Right ventricle myocardium inferior (tissue), 1 donor: ENCODE measurements at regions of chr12 and their contacts with region 1.

Region 1: GRCh38 chr12:53071591-53072551 is 7.3 kb downstream of the SPRYD3 start:
- DNase-seq: peak; percentile 87
- ATAC-seq: peak; percentile 58

Region 2: DNA sequence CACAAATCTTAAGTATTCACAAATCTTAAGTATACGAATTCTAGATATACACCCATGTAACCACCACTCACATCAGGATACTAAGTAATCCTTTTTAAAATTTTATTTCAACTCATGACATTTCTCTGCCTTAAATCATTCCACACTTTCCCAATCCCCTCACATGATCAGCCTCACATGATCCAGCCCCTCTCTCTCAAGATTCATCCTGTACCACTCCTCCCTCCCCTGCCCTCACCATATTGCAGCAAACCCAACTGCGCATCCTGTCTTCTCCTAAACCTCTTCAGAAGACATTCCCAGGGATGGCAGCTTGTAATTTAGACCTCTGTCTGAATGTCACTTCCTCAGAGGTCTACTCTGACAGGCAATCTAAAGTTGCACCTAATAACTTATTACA is 67.3 kb before region 1 on chr12:
- intact Hi-C with region 1: no loop called
- DNase-seq: no peak
- ATAC-seq: no peak

Region 3: DNA sequence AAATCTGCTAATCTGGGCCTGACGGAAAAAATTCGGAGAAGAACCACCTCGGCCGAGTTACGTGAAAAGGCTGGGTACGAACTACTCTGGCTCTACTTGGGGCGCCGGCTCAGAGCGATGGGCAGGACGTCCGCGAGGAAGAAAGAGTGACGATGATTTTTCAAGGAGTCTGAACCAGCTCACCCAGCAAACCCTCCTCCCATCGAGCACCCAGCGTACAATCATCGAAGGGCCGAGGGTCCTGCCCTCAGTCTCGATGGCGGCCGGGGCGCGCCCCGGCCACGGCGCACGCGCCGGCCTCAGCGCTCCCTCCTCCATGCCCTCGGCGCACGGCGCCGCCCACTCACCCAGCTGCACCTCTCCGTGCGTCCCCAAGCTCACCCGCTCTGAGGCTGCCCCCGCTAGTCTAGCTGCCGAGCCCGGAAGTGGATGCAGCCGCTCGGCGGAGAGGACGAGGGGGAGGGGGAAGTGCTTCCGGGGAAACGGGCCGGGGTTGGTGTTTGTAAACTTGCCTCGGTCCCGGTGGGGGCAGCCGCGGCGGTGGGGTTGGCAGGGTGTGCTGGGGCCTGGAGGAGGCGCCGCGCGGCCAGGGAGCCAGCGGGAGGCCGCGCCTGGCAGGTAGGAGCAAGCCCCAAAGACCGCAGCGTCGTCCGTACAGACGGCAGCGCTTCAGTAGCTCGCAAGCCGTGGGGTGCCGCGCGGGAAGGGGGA is 108.5 kb after region 1 on chr12 and contains the starts of genes CSAD and ZNF740:
- intact Hi-C with region 1: loop called (anchors 5 kb)
- DNase-seq: peak; percentile 99
- ATAC-seq: peak; percentile 100
- total RNA-seq, gene CSAD: 10.8 TPM
- total RNA-seq, gene ZNF740: 31.5 TPM